ENCODE measurements at regions of chr15 and their contacts with region 1.

Region 1: GRCh38 chr15:63122002-63122893 is 587 bp downstream of the LACTB start:
- DNase-seq: peak; percentile 83 to 91
- ATAC-seq: peak; percentile 96 to 98 (median 97)
- H3K4me3 ChIP-seq: peak overlapping the region; percentile 97
- H3K27ac ChIP-seq: peak overlapping the region; percentile 98
- H3K4me1 ChIP-seq: no peaks in the 10 kb centered on the region
- H3K27me3 ChIP-seq: no peaks in the 10 kb centered on the region
- CTCF ChIP-seq: peak; percentile 36

Region 2: GRCh38 chr15:63157118-63157843 is 35.0 kb after region 1 on chr15 and contains the start of gene RPS27L:
- intact Hi-C with region 1: loop called in 1 of 2 experiments (anchors 5 kb)
- DNase-seq: peak; percentile 91 to 94
- ATAC-seq: peak; percentile 91 to 94 (median 93)
- H3K4me3 ChIP-seq: peak within 1 kb of the TSS; percentile 93
- H3K27ac ChIP-seq: peak within 1 kb of the TSS; percentile 99
- H3K4me1 ChIP-seq: peaks cover 18% of the 10 kb centered on the region
- H3K27me3 ChIP-seq: no peaks in the 10 kb centered on the region
- CTCF ChIP-seq: no peak
- total RNA-seq, gene RPS27L: 97.0 to 169 (median 132) TPM

Region 3: DNA sequence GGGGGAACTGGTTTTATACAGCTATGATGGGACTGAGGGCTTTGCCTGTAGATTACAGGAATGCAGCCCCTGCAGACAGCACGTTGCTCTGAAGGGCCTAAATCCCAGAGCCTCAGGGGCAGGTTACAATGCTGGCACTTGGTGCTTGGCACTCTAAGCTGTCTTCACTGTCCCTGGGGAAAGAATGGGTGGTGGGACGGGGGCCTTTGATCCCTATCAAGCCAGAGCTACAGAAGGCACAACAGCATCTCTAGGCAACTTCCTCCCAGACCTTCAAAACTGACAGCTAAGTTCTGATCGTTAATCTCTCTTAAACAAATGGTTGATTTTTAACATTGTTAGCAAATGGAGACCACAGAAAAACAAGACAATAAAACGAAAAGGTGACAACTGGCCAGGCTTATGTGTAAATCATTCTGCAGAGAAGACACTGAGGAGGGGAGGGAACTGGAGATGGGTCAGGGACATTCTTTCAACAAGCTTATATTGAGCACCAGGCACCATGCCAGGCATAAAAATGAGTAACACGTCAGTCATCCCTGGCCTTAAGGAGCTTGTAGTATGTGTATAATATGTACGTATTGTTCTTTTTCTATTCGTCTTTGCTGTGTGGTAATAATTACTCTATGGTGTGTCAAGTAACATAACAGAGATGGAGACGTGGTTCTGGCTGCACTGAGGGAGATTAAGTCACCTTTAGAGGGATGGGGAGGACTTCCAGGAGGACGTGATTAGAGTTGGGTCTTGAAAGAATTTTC is 210.3 kb after region 1 on chr15:
- intact Hi-C with region 1: no loop called
- DNase-seq: no peak
- ATAC-seq: peak in 3 of 4 donors; percentile 81 to 95 (median 91)
- H3K4me3 ChIP-seq: no peak overlapping the region
- H3K27ac ChIP-seq: no peak overlapping the region
- H3K4me1 ChIP-seq: no peaks in the 10 kb centered on the region
- H3K27me3 ChIP-seq: peaks cover 0 to 2% (median 0%) of the 10 kb centered on the region in 3 donors
- CTCF ChIP-seq: no peak

Measured in psoas muscle (tissue), 8 donors.